AG04450 (cell line): ENCODE measurements at regions of chr14 and their contacts with region 1.

Region 1: GRCh38 chr14:56181681-56182085 is 63.5 kb downstream of the PELI2 start:
- DNase-seq: no peak
- H3K4me3 ChIP-seq: no peak overlapping the region
- H3K27ac ChIP-seq: no peak overlapping the region
- H3K27me3 ChIP-seq: no peaks in the 10 kb centered on the region
- CTCF ChIP-seq: no peak

Region 2: GRCh38 chr14:56170028-56170427 is 11.7 kb before region 1 on chr14:
- CTCF ChIA-PET with region 1: no interaction called
- POLR2A ChIA-PET with region 1: no interaction called
- DNase-seq: no peak
- H3K4me3 ChIP-seq: no peak overlapping the region
- H3K27ac ChIP-seq: no peak overlapping the region
- H3K27me3 ChIP-seq: no peaks in the 10 kb centered on the region
- CTCF ChIP-seq: no peak

Region 3: GRCh38 chr14:56193347-56193746 is 11.7 kb after region 1 on chr14:
- CTCF ChIA-PET with region 1: no interaction called
- POLR2A ChIA-PET with region 1: interaction called, 12 read pairs
- DNase-seq: no peak
- H3K4me3 ChIP-seq: no peak overlapping the region
- H3K27ac ChIP-seq: no peak overlapping the region
- H3K27me3 ChIP-seq: no peaks in the 10 kb centered on the region
- CTCF ChIP-seq: no peak